Motor neuron (in vitro differentiated cells): ENCODE measurements at regions of chr19 and their contacts with region 1.

Region 1: DNA sequence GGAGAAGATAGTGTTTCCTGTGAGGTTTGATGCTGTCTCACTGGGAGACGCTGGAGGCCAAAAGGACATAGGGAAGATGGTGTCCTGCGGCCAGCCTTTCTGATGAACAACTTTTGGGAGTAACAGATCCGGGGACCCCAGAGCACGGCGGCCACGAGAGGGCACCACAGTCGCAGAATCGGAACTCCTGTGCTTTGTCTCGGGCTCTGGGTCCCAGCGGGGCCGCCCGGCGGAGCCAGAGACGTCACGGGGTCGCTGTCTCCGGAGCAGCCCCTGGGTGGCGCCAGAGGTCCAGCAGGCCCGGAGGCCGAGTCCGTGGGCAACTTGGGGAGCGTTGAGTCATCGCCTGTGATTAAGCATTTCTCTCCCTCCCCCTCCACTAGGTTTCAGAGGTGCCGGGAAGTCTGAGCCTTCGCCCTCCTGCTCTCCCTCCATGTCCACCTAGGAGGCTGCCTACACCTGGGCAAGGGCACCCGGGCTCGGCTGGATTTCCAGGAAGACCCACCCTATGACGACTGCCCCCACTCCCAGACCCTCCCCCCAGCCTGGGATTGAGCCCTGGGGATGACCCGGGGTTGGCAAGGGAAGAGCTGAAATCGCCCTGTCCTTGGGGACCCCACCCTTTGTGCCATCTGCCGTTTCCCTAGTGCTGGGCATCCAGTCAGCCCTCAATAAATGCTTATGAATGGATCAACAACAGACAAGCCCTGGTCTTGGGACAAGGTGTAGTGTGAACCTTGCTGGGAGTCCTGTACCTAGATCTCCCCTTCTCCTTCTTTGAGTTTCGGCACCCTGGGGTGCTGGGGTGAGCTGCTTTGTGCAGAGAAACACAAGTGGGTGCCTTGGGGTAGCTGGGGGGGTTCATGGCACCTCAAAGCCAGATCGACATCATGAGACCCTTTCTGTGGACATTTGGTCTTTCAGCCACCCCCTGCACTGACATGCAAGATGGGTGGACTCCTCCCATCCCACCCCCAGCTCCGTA is 3.4 kb downstream of the NANOS3 start:
- ATAC-seq: peak; percentile 93 to 97 (median 96)
- H3K4me3 ChIP-seq: peak overlapping the region in 3 of 5 donors; percentile 0 to 4 (median 1)
- H3K27ac ChIP-seq: no peak overlapping the region
- H3K4me1 ChIP-seq: peaks cover 18 to 22% of the 10 kb centered on the region in 2 donors

Region 2: DNA sequence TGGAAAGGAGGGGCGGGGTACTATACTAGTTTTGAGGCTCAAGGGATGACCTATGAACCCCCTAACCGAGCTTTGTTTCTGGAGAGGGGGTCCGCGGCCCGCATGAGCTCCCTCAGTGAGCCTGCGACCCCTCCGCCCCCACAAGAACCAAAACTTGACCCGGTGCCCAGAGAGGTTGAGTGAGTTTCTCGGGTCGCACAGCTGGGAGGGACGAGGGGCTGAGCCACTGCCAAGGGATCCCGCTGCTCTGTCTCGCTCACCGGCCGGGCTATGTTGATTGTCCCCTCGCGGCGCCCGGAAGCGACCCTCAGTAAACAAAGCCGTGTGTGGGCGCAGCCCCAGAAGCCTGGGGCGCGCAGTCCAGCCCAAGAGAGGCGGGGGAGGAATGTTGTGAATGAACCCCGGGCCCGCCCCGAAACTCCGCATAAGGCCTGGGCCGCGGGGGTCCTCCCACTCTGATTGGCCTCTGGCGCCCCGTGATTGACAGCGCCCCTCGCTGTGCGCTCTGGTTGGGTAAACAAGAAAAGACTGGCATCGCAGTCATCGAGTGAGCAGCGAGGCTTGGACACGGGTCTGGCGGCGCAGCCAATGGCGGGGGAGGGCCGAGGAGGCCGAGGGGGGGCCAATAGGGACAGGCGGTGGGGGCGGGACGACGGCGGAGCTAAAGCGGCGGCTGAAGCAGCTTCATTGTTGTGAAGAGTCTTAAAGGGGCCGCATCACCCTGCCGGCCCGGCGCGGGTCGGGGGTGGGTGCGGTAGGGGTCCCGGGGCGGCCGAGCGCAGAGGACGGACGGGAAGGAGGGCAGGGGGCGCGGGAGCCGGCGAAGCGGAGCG is 85.4 kb before region 1 on chr19 and contains the start of gene ZSWIM4:
- in situ Hi-C with region 1: no loop called
- ATAC-seq: peak; percentile 85 to 98 (median 98)
- H3K4me3 ChIP-seq: peak within 1 kb of the TSS; percentile 89 to 99 (median 96)
- H3K27ac ChIP-seq: peak within 1 kb of the TSS; percentile 76 to 85
- H3K4me1 ChIP-seq: peaks cover 7 to 8% of the 10 kb centered on the region in 2 donors
- total RNA-seq, gene ZSWIM4: 1.2 to 14.5 (median 8.6) TPM

Region 3: DNA sequence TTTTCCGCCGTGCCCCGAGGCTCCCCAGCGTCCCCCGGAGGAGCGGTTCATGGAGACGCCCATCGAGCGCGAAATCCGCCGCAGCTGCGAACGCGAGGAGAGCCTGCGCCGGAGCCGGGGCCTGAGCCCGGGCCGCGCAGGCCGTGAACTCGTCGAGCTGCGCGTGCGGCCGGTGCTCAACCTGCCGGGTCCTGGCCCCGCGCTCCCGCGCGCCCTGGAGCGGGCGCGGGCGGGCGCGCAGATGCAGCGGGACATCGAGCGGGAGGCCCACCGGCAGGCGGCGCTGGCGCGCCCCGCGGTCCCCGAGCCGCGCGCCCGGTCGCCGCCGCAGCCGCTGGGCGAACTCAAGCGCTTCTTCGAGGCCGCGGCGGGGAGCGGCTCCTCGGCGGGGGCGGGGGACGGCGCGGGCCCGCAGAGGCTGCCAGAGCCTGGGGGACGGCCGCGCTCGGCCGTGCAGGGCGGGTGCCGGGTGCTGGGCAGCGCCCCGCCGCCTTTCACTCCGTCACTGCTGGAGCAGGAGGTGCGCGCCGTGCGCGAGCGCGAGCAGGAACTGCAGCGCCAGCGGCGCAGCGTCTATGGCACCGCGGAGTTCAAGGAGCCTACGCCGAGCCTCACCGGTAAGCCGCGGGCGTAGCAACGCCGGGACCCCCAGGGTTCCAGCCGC is 193.0 kb after region 1 on chr19:
- in situ Hi-C with region 1: loop called in 8 of 9 experiments (anchors 10 to 25 kb)
- ATAC-seq: peak; percentile 68 to 77 (median 72)
- H3K4me3 ChIP-seq: peak overlapping the region; percentile 43 to 83 (median 76)
- H3K27ac ChIP-seq: peak overlapping the region in 1 of 2 donors; percentile 3
- H3K4me1 ChIP-seq: peaks cover 7 to 16% of the 10 kb centered on the region in 2 donors

Region 4: GRCh38 chr19:14419106-14419813 is 538.9 kb after region 1 on chr19 and contains the start of gene DDX39A:
- in situ Hi-C with region 1: loop called in 1 of 9 experiments (anchors 25 kb)
- ATAC-seq: peak; percentile 90 to 98 (median 97)
- H3K4me3 ChIP-seq: peak within 1 kb of the TSS; percentile 61 to 83 (median 75)
- H3K27ac ChIP-seq: peak within 1 kb of the TSS; percentile 86 to 95
- H3K4me1 ChIP-seq: peaks cover 10 to 12% of the 10 kb centered on the region in 2 donors
- total RNA-seq, gene DDX39A: 25.7 to 134 (median 58.3) TPM